Caco-2 (cell line): ENCODE measurements at regions of chr20 and their contacts with region 1.

Region 1: GRCh38 chr20:25696384-25697131 is at the start of gene ZNF337:
- DNase-seq: peak; percentile 98
- H3K4me3 ChIP-seq: peak within 1 kb of the TSS; percentile 91
- H3K4me3 Mint-ChIP-seq: peak within 1 kb of the TSS; percentile 82
- H3K27ac Mint-ChIP-seq: peak within 1 kb of the TSS; percentile 84
- H3K4me1 ChIP-seq: no peaks in the 10 kb centered on the region
- H3K4me1 Mint-ChIP-seq: peaks cover 8% of the 10 kb centered on the region
- H3K27me3 ChIP-seq: no peaks in the 10 kb centered on the region
- H3K27me3 Mint-ChIP-seq: no peaks in the 10 kb centered on the region
- CTCF ChIP-seq: peak in 1 of 2 experiments; percentile 53
- total RNA-seq, gene ZNF337: 7.4 and 8.4 TPM in 2 replicates

Region 2: GRCh38 chr20:25461771-25462545 is 234.6 kb before region 1 on chr20:
- CTCF ChIA-PET with region 1: no interaction called
- POLR2A ChIA-PET with region 1: no interaction called
- intact Hi-C with region 1: loop called (anchors 10 kb)
- DNase-seq: no peak
- H3K4me3 ChIP-seq: no peak overlapping the region
- H3K4me3 Mint-ChIP-seq: no peak overlapping the region
- H3K27ac Mint-ChIP-seq: no peak overlapping the region
- H3K4me1 ChIP-seq: no peaks in the 10 kb centered on the region
- H3K4me1 Mint-ChIP-seq: no peaks in the 10 kb centered on the region
- H3K27me3 ChIP-seq: no peaks in the 10 kb centered on the region
- H3K27me3 Mint-ChIP-seq: no peaks in the 10 kb centered on the region
- CTCF ChIP-seq: no peak

Region 3: GRCh38 chr20:25623736-25624499 is 72.6 kb before region 1 on chr20 and contains the start of gene NANP:
- CTCF ChIA-PET with region 1: no interaction called
- POLR2A ChIA-PET with region 1: no interaction called
- intact Hi-C with region 1: loop called (anchors 1 kb)
- DNase-seq: peak; percentile 99
- H3K4me3 ChIP-seq: peak within 1 kb of the TSS; percentile 100
- H3K4me3 Mint-ChIP-seq: peak within 1 kb of the TSS; percentile 83
- H3K27ac Mint-ChIP-seq: peak within 1 kb of the TSS; percentile 96
- H3K4me1 ChIP-seq: peaks cover 8% of the 10 kb centered on the region; the same call in 1 of the 2 replicates
- H3K4me1 Mint-ChIP-seq: peaks cover 17% of the 10 kb centered on the region
- H3K27me3 ChIP-seq: no peaks in the 10 kb centered on the region
- H3K27me3 Mint-ChIP-seq: no peaks in the 10 kb centered on the region
- CTCF ChIP-seq: no peak
- total RNA-seq, gene NANP: 9.3 and 10.1 TPM in 2 replicates

Region 4: GRCh38 chr20:25720294-25720693 is 23.7 kb after region 1 on chr20:
- CTCF ChIA-PET with region 1: no interaction called
- POLR2A ChIA-PET with region 1: no interaction called
- intact Hi-C with region 1: loop called (anchors 2 kb)
- DNase-seq: no peak
- H3K4me3 ChIP-seq: no peak overlapping the region
- H3K4me3 Mint-ChIP-seq: no peak overlapping the region
- H3K27ac Mint-ChIP-seq: no peak overlapping the region
- H3K4me1 ChIP-seq: peaks cover 17% of the 10 kb centered on the region
- H3K4me1 Mint-ChIP-seq: peaks cover 12% of the 10 kb centered on the region
- H3K27me3 ChIP-seq: no peaks in the 10 kb centered on the region
- H3K27me3 Mint-ChIP-seq: no peaks in the 10 kb centered on the region
- CTCF ChIP-seq: no peak

Region 5: GRCh38 chr20:25750765-25751696 is 54.5 kb after region 1 on chr20:
- CTCF ChIA-PET with region 1: no interaction called
- POLR2A ChIA-PET with region 1: no interaction called
- intact Hi-C with region 1: loop called (anchors 1 kb)
- DNase-seq: peak; percentile 77 to 86
- H3K4me3 ChIP-seq: peak overlapping the region; percentile 63
- H3K4me3 Mint-ChIP-seq: peak overlapping the region; percentile 90
- H3K27ac Mint-ChIP-seq: peak overlapping the region; percentile 94
- H3K4me1 ChIP-seq: peaks cover 12% of the 10 kb centered on the region
- H3K4me1 Mint-ChIP-seq: no peaks in the 10 kb centered on the region
- H3K27me3 ChIP-seq: no peaks in the 10 kb centered on the region
- H3K27me3 Mint-ChIP-seq: no peaks in the 10 kb centered on the region
- CTCF ChIP-seq: no peak

Region 6: GRCh38 chr20:25863536-25864325 is 167.2 kb after region 1 on chr20:
- CTCF ChIA-PET with region 1: no interaction called
- POLR2A ChIA-PET with region 1: no interaction called
- intact Hi-C with region 1: loop called (anchors 1 kb)
- DNase-seq: peak; percentile 72 to 87
- H3K4me3 ChIP-seq: peak overlapping the region; percentile 67
- H3K4me3 Mint-ChIP-seq: peak overlapping the region; percentile 77
- H3K27ac Mint-ChIP-seq: no peak overlapping the region
- H3K4me1 ChIP-seq: peaks cover 10% of the 10 kb centered on the region; the same call in 1 of the 2 replicates
- H3K4me1 Mint-ChIP-seq: peaks cover 19% of the 10 kb centered on the region
- H3K27me3 ChIP-seq: no peaks in the 10 kb centered on the region
- H3K27me3 Mint-ChIP-seq: no peaks in the 10 kb centered on the region
- CTCF ChIP-seq: no peak